ENCODE measurements at regions of chr1 and their contacts with region 1.

Region 1: DNA sequence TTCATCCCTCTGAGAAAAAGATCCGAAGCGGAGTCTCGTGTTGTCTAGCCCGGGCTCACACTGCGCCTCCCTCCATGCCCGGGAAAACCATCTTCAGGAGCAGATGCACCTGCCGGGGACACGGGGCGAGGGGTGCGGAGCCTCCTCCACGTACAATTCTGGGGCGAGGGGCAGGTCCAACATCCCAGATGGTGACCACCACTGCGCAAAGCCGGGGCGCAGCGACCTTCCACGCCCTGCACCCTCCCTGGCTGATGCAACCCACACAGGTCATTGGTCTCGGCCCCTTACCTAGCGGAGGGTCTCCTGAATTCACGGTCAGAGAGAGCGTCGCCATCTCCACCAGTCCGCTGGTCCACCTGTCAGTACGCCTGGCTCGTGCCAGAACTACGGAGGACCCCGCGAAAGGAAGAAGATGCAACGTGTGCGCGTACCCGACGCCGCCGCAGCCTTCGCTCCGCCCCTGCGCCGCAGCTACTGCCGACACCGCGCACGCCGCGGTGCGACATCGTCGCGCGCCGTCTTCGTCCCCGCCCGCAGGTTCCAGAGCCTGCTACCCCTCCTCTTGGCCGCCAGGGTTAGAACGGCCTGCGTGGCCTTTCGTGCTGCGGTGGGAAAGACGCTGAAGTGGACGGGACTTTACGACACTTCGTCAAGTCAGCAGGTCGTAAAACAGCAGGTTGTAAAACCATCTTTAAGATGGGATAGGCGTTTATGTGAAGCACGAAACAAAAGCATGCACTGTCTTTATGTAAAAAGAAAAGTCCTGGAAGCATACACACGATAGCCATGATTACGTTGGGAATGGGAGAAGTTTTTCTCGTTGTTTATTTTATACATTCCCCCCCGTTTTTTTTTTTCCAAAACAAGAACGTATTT is at the start of gene EPRS1:
- DNase-seq: peak; percentile 92 to 98 (median 95)
- H3K4me3 ChIP-seq: peak within 1 kb of the TSS; percentile 31 to 85 (median 73)
- H3K27ac ChIP-seq: peak within 1 kb of the TSS; percentile 11 to 88 (median 79)
- H3K4me1 ChIP-seq: peaks cover 0 to 15% of the 10 kb centered on the region in 2 donors
- H3K27me3 ChIP-seq: no peaks in the 10 kb centered on the region
- CTCF ChIP-seq: peak; percentile 62 to 95 (median 79)
- POLR2A ChIP-seq: peak in 1 of 2 donors; percentile 84
- total RNA-seq, gene EPRS1: 33.9 to 86.8 (median 57.1) TPM

Region 2: GRCh38 chr1:220089650-220090556 is 43.6 kb after region 1 on chr1 and contains the start of gene BPNT1:
- intact Hi-C with region 1: loop called in 1 of 2 experiments (anchors 10 kb)
- DNase-seq: peak; percentile 95 to 99 (median 97)
- H3K4me3 ChIP-seq: peak within 1 kb of the TSS in 3 of 4 donors; percentile 23 to 70 (median 35)
- H3K27ac ChIP-seq: peak within 1 kb of the TSS in 3 of 5 donors; percentile 31 to 50 (median 47)
- H3K4me1 ChIP-seq: peaks cover 12 to 16% of the 10 kb centered on the region in 2 donors
- H3K27me3 ChIP-seq: no peaks in the 10 kb centered on the region
- CTCF ChIP-seq: peak in 2 of 6 experiments; percentile 12 to 13
- POLR2A ChIP-seq: peak; percentile 65 to 94
- total RNA-seq, gene BPNT1: 16.5 to 40.7 (median 29.2) TPM

Measured in adrenal gland (tissue), 19 donors.